Colonic mucosa (tissue), 4 donors: ENCODE measurements at regions of chr5 and their contacts with region 1.

Region 1: GRCh38 chr5:136249678-136250266 is 56.8 kb upstream of the SMIM32 start:
- DNase-seq: peak; percentile 47
- H3K4me3 ChIP-seq: no peak overlapping the region
- H3K27ac ChIP-seq: no peak overlapping the region
- H3K4me1 ChIP-seq: no peaks in the 10 kb centered on the region
- H3K27me3 ChIP-seq: no peaks in the 10 kb centered on the region
- CTCF ChIP-seq: peak; percentile 71

Region 2: GRCh38 chr5:135973323-135974020 is 276.3 kb before region 1 on chr5:
- intact Hi-C with region 1: no loop called
- DNase-seq: no peak
- H3K4me3 ChIP-seq: no peak overlapping the region
- H3K27ac ChIP-seq: no peak overlapping the region
- H3K4me1 ChIP-seq: no peaks in the 10 kb centered on the region
- H3K27me3 ChIP-seq: no peaks in the 10 kb centered on the region
- CTCF ChIP-seq: no peak

Region 3: DNA sequence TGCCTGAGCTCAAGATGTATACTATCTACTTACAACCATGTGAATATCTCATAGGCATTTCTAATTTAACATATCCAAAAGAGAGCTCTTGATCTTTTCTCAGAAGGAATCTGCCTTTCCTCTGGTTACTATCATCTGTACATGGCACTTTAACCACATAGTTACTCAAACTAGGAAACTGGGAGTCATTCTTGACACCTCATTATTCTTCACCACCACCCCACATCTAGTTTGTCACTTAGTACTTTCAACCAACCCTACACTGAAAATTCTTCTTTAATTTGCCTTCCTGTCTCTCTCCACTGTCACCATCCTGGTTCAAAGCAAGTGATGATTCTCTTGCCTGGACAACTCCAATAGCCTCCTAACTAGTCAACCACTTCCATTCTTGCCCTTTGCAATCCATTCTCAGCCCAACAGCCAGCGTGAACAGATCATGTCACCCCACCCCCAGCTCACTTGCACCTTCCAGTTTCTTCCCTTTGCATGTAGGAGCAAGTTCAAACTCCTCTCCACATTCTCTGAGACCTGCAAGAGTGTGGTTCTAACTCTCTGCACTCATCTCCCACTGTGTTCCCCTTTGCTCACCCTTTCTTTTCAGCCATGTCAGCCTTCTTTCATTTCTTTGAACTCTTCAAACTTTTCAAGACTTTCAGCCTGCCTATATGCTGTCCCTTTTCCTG is 134.4 kb before region 1 on chr5:
- intact Hi-C with region 1: no loop called
- DNase-seq: no peak
- H3K4me3 ChIP-seq: no peak overlapping the region
- H3K27ac ChIP-seq: no peak overlapping the region
- H3K4me1 ChIP-seq: no peaks in the 10 kb centered on the region
- H3K27me3 ChIP-seq: no peaks in the 10 kb centered on the region
- CTCF ChIP-seq: no peak

Region 4: DNA sequence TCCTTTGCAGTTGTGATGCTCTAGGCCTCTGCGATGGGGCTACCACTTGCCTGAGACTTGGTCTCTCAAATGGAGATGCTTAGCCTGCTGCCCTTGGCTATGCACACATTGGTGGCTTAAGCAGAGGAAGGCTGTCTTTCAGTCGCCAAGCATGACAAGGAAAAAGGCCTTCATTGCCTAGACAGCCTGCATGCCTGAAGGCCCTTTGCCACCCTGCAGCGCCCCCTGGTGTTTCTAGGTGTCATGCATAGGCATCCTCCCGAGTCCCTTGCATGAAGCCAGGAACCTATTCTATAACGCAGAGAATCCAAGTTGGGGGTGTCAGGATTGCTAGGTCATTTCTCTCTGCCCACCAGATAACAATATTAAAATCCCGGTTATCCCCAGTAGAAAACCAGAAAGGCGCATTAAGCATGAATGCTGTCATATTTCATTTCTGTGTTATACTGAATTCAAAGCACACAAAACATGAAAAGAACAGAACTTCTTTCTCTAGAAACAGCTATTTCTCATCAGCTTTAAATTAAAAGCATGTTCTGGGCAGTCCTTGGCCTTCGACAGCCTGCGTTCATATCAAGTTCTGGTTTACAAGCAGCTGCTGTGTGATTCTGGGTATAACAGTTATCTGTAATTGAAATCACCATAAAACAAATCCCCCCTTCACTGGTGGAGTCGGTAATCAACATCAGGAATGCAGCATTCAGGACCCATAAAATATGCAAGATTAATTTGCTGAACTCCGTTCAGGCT is 175.2 kb after region 1 on chr5:
- intact Hi-C with region 1: loop called (anchors 2 kb)
- DNase-seq: peak; percentile 82
- H3K4me3 ChIP-seq: no peak overlapping the region
- H3K27ac ChIP-seq: no peak overlapping the region
- H3K4me1 ChIP-seq: no peaks in the 10 kb centered on the region
- H3K27me3 ChIP-seq: no peaks in the 10 kb centered on the region
- CTCF ChIP-seq: peak; percentile 59

Region 5: DNA sequence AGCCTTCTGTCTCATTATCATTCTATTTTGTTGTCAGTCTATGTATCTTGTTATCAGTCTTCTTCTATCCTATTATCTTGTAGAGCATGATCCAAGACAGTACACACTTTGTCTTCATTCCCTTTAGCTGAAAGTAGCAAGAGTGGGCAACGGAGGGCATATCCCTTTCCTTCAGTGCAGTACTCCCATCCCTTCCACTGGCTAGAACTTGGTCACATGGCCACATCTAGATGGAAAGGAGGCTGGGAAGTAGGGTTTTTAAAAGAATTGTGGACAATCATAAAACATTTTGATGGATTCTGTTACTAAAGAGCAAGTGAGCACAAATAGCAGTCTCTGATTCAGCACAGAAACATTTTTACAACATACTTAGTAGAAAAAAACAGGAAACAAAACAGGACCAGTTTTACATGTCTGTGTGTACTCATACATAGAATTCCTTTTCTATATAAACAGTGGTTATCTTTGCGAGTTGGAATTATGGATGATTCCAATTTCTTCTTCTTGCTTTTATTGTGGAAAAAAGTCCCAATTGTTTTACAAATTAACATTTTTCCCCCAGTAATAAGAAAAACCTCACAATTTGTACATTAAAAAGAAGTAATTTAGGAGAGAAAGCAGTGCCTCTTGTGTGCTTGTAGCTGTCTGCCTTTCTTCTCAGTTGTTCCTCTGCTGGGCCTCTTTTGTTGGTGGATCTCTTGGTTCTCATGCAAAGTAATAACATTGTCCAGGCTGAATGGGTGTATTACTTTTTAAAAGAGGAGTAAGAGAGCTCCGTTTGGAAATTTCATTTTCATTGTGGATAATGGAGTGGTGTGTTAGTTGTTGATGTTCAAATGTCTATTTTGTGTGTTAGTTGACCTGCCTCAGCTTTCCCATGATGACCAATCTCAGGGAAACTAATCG is 526.5 kb after region 1 on chr5:
- intact Hi-C with region 1: loop called (anchors 5 kb)
- DNase-seq: no peak
- H3K4me3 ChIP-seq: no peak overlapping the region
- H3K27ac ChIP-seq: no peak overlapping the region
- H3K4me1 ChIP-seq: no peaks in the 10 kb centered on the region
- H3K27me3 ChIP-seq: no peaks in the 10 kb centered on the region
- CTCF ChIP-seq: no peak